ENCODE measurements at regions of chr20 and their contacts with region 1.

Region 1: DNA sequence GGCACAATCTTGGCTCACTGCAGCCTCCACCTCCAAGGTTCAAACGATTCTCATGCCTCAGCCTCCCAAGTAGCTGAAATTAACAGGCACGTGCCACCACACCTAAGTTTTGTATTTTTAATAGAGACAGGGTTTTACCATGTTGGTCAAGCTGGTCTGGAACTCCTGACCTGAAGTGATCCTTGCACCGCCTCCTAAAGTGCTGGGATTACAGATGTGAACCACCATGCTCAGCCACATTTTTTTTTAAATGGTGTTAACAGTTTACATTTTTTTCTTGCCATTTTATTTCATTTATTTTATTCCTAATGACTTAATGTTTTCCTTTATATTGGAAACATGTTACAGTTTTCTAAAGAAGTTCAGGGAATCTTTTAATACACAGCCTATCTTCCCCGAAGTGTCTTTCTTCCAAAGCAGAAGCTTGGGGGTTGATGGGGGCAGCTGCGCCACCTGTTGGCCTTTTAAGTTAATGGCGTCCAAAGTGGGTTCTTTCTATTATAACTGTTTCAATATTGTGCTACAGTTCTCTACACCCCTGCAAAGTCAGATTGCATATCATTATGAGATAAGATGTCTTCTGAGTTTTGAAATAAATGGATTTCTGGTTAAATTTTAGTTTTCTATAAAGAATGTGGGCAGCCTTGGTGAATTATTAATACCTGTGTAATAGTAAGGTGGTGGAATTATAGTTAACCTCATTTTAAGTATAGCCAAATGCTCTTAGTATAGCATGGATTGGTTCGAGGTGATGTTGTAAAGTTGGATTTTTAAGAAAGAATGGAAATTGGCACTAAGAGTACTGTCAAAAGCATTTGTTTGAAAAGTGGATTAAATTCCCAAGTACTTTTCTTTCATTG is 42.0 kb upstream of the PLCG1 start:
- DNase-seq: peak in 8 of 10 donors; percentile 38 to 64 (median 60)
- H3K4me3 ChIP-seq: no peak overlapping the region
- H3K27ac ChIP-seq: peak overlapping the region in 1 of 59 donors; percentile 32
- H3K27me3 ChIP-seq: no peaks in the 10 kb centered on the region
- CTCF ChIP-seq: peak; percentile 74 to 96 (median 86)

Region 2: DNA sequence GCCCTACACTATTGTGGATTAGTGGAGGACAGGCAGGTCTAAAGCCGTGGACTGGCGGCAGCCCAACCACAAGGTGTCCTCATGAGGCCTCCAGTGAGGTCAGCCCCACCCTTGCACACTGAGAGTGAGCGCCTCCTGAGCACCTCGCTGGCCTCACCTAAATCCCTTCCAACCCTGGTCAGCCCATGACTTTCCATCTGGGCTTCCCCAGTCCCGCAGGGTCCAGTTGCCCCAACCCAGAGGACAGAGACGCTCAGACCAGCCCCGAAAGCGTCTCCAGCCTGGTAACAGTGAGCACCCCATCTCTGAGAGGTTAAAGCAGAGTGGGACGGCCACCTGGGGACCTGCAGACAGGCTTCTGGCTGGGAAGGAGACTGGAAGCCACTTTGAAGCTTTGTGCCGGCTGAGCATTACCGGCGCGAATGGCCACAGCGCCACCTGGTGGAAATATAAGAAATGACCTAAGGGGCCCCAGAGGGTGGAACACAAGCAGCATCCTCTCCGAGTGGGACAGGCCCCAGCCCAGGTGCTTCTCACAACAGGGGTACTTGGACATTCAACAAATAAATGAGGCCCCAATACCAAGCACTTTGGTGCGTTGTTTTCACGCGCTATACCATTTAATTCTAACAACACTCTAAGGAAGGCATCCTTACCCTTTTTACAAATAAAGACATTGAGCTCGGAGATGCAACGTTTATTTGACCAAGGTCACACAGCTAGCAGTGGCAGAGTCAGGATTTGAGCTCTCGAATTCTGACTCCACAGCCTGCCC is 132.4 kb before region 1 on chr20:
- intact Hi-C with region 1: loop called (anchors 5 kb)
- DNase-seq: peak; percentile 55 to 84 (median 66)
- H3K4me3 ChIP-seq: peak overlapping the region in 1 of 59 donors; percentile 16
- H3K27ac ChIP-seq: no peak overlapping the region
- H3K27me3 ChIP-seq: no peaks in the 10 kb centered on the region
- CTCF ChIP-seq: peak; percentile 83 to 97 (median 94)

Region 3: GRCh38 chr20:40990542-40991120 is 104.7 kb before region 1 on chr20:
- intact Hi-C with region 1: loop called (anchors 2 kb)
- DNase-seq: peak; percentile 50 to 82 (median 74)
- H3K4me3 ChIP-seq: no peak overlapping the region
- H3K27ac ChIP-seq: peak overlapping the region in 4 of 59 donors; percentile 3 to 49 (median 42)
- H3K27me3 ChIP-seq: no peaks in the 10 kb centered on the region
- CTCF ChIP-seq: peak; percentile 8 to 89 (median 75)

Measured in dorsolateral prefrontal cortex (tissue), 120 donors.